ENCODE measurements at regions of chr9 and their contacts with region 1.

Region 1: DNA sequence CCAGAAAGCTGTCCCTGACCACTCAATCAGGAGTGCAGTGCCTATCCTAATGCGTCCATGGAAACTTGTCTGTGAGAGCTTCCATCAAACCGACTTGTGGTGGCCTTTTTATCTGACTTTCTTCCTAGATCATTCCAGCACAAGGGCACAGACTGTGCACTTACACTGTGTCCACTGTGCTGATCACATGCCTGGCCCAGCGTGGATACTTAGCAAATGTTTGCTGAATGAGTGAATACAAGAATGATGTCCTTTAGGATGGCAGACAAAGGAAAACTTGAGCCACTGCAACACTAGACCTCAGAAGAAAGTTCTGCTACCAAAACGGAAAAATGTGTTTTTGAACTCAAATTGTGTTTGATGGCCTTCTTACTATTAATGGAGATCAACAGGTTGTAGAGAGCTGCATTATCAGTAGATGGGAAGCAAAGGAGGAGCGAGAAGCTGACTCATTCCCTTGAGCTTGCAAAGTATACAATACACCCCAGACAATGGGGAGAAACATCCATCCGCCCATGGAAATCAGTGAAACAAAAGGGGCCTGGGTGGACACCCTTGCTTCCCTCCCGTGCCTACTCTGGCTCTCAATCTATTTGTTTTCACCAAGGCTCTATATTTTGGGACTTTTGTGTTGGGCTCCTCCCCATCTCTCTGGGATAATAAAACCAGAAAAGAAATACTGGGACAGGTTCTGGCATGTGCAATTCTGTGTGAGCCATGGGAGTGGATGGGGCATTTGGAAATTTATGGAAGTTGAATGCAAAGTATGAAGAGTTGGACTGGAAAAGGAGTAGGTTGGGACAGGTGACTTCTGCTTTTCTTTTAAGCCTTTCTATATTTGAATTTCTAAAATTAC is 76.2 kb upstream of the ZFAND5 start:
- DNase-seq: no peak
- H3K4me3 ChIP-seq: no peak overlapping the region
- H3K27ac ChIP-seq: no peak overlapping the region
- H3K4me1 ChIP-seq: peaks cover 33% of the 10 kb centered on the region
- H3K27me3 ChIP-seq: no peaks in the 10 kb centered on the region
- CTCF ChIP-seq: no peak
- POLR2A ChIP-seq: no peak

Region 2: DNA sequence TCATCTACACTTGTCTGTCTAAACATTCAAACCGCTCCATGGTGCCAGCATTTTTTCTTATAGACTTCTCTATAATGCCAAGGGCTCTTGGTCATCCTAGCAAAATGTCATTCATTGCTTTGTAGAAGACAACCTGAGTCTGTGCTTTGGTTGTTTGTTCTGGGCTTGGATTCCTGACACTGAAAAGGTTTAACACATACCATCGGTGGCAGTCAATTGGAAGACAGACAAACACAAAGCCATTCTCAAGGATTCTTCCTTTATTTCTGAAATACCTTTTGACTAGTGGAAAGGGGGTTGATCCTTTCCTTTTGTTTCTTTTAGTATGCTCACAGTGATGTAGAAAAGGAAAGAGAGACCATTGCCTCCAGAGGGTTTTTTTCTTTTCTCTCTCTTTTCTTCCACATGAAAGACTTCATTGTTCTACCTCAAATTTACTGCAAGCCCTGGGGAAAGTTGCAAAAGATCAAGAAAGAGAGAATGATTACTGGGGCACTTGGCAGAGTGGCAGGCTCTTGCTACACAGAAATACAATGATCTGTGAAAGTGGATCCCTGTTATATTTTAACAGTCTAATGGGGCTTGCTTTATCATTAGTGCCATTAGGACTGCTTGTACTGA is 13.8 kb after region 1 on chr9:
- intact Hi-C with region 1: loop called (anchors 1 kb)
- DNase-seq: no peak
- H3K4me3 ChIP-seq: no peak overlapping the region
- H3K27ac ChIP-seq: no peak overlapping the region
- H3K4me1 ChIP-seq: peaks cover 5% of the 10 kb centered on the region
- H3K27me3 ChIP-seq: no peaks in the 10 kb centered on the region
- CTCF ChIP-seq: no peak
- POLR2A ChIP-seq: no peak